HAP-1 (cell line): ENCODE measurements at regions of chr18 and their contacts with region 1.

Region 1: GRCh38 chr18:55415258-55415871 is 172.6 kb downstream of the TCF4 start:
- DNase-seq: peak; percentile 68 to 89
- H3K4me3 ChIP-seq: no peak overlapping the region
- H3K4me1 ChIP-seq: peaks cover 16% of the 10 kb centered on the region
- H3K27me3 ChIP-seq: no peaks in the 10 kb centered on the region

Region 2: GRCh38 chr18:55087998-55088401 is 327.4 kb before region 1 on chr18:
- in situ Hi-C with region 1: no loop called
- DNase-seq: no peak
- H3K4me3 ChIP-seq: no peak overlapping the region
- H3K4me1 ChIP-seq: no peaks in the 10 kb centered on the region; the same call in none of the 2 replicates
- H3K27me3 ChIP-seq: no peaks in the 10 kb centered on the region

Region 3: GRCh38 chr18:55234366-55235093 is 180.8 kb before region 1 on chr18:
- in situ Hi-C with region 1: loop called (anchors 10 kb)
- DNase-seq: peak; percentile 81 to 85
- H3K4me3 ChIP-seq: no peak overlapping the region
- H3K4me1 ChIP-seq: peaks cover 7% of the 10 kb centered on the region; the same call in 1 of the 2 replicates
- H3K27me3 ChIP-seq: no peaks in the 10 kb centered on the region

Region 4: GRCh38 chr18:55589625-55590291 is 174.4 kb after region 1 on chr18:
- in situ Hi-C with region 1: loop called (anchors 25 kb)
- DNase-seq: peak; percentile 91 to 98
- H3K4me3 ChIP-seq: peak overlapping the region; percentile 39
- H3K4me1 ChIP-seq: peaks cover 24% of the 10 kb centered on the region
- H3K27me3 ChIP-seq: no peaks in the 10 kb centered on the region

Region 5: GRCh38 chr18:55731594-55732042 is 316.3 kb after region 1 on chr18:
- in situ Hi-C with region 1: loop called (anchors 25 kb)
- DNase-seq: no peak
- H3K4me3 ChIP-seq: no peak overlapping the region
- H3K4me1 ChIP-seq: peaks cover 10% of the 10 kb centered on the region
- H3K27me3 ChIP-seq: no peaks in the 10 kb centered on the region

Region 6: GRCh38 chr18:56168049-56168781 is 752.9 kb after region 1 on chr18:
- in situ Hi-C with region 1: no loop called
- DNase-seq: no peak
- H3K4me3 ChIP-seq: no peak overlapping the region
- H3K4me1 ChIP-seq: peaks cover 6% of the 10 kb centered on the region; the same call in 1 of the 2 replicates
- H3K27me3 ChIP-seq: no peaks in the 10 kb centered on the region